GM23248 (cell line): ENCODE measurements at regions of chr7 and their contacts with region 1.

Region 1: GRCh38 chr7:26365077-26365900 is 73.6 kb downstream of the SNX10 start:
- DNase-seq: peak; percentile 79
- H3K4me3 ChIP-seq: no peak overlapping the region
- H3K27ac ChIP-seq: no peak overlapping the region
- H3K4me1 ChIP-seq: no peaks in the 10 kb centered on the region
- H3K27me3 ChIP-seq: peaks cover 3% of the 10 kb centered on the region; the same call in 1 of the 2 replicates

Region 2: GRCh38 chr7:25125137-25125946 is 1239.9 kb before region 1 on chr7 and contains the start of gene CYCS:
- in situ Hi-C with region 1: no loop called
- DNase-seq: peak; percentile 100
- H3K4me3 ChIP-seq: peak within 1 kb of the TSS; percentile 96
- H3K27ac ChIP-seq: peak within 1 kb of the TSS; percentile 81
- H3K4me1 ChIP-seq: peaks cover 23% of the 10 kb centered on the region
- H3K27me3 ChIP-seq: no peaks in the 10 kb centered on the region
- total RNA-seq, gene CYCS: 51.6 and 56.9 TPM in 2 replicates

Region 3: DNA sequence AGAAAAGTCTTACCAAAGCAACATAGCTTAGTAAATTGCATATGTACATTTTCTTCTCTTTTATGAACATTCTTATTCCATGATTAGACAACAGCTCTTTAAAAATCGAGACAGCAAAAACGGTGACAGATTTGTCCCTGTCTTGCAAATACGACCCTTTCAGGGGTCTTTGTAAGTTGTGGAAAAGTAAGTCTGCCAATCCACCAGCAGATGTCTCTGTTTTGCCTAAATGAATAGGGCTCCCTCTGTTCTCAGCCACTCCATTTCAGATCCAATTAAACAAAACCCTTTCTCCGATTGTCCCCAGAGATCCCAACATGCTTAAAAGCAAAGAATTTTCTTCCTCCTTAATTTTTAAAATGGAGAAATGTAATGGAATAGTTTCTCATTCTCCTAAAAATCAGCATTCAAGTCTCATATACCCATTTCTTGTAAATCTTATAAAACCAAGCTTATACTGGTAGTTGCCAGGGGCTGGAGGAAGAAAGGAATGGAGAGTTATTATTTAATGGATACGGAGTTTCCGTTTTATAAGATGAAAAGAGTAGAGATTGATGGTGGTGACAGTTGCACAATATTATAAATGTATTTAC is 274.3 kb before region 1 on chr7:
- in situ Hi-C with region 1: loop called (anchors 10 kb)
- DNase-seq: peak; percentile 73
- H3K4me3 ChIP-seq: no peak overlapping the region
- H3K27ac ChIP-seq: no peak overlapping the region
- H3K4me1 ChIP-seq: no peaks in the 10 kb centered on the region
- H3K27me3 ChIP-seq: no peaks in the 10 kb centered on the region

Region 4: GRCh38 chr7:26265065-26265464 is 100.2 kb before region 1 on chr7:
- in situ Hi-C with region 1: no loop called
- DNase-seq: peak; percentile 45
- H3K4me3 ChIP-seq: no peak overlapping the region
- H3K27ac ChIP-seq: no peak overlapping the region
- H3K4me1 ChIP-seq: no peaks in the 10 kb centered on the region
- H3K27me3 ChIP-seq: no peaks in the 10 kb centered on the region

Region 5: DNA sequence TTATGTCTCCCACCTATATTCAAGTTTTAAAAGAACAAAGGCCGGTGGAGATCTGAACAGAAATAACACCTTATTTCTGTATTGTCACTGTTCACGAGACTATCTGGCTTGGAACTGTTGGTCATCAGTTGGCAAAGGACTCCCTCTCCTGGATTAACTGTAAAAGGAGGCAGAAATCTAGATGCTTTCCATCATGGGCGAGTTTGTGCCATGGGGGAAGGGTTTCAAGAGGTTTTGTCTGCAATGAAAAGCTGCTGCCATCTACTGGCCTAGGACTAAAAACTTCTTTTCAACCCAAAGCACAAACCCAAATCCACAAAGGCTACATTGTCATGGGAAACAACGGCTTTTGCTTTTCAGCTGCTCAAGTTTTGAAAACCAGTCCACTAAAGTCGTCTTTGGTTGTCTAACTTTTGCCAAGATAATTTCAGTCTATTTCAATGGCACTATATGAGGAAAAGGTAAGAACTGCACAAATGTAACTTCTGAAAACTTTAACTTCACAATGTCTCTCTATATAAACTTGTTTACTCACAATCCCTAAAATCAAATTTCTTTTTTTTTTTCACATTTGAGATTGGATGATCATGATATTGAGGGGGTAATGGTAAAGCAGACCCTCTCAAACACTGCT is 302.3 kb after region 1 on chr7:
- in situ Hi-C with region 1: loop called (anchors 5 kb)
- DNase-seq: peak; percentile 94
- H3K4me3 ChIP-seq: no peak overlapping the region
- H3K27ac ChIP-seq: no peak overlapping the region
- H3K4me1 ChIP-seq: 0 out of 2 replicates have a peak, but pooled peaks cover 8% of the 10 kb centered on the region
- H3K27me3 ChIP-seq: no peaks in the 10 kb centered on the region

Region 6: DNA sequence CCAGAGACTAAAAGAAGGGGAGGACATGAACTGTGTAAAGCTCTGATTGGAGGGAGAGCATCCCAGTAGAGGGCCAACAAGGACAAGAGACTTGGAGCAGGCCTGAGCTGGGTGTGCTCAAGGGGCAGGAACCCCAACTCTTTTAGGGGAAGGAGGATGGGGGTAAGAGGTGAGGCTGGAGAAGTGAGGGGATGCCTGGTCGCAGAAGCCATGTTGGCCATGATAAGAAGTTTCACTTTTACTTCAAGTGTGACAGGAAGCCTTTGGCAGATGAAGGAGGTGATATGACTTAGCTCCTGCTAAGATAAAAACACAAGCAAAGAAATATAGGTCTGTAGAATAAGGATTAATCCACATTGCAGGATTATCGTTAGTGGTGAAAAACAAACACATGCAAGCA is 1607.0 kb after region 1 on chr7:
- in situ Hi-C with region 1: no loop called
- DNase-seq: no peak
- H3K4me3 ChIP-seq: no peak overlapping the region
- H3K27ac ChIP-seq: no peak overlapping the region
- H3K4me1 ChIP-seq: no peaks in the 10 kb centered on the region
- H3K27me3 ChIP-seq: no peaks in the 10 kb centered on the region